ENCODE measurements at regions of chr10 and their contacts with region 1.

Region 1: DNA sequence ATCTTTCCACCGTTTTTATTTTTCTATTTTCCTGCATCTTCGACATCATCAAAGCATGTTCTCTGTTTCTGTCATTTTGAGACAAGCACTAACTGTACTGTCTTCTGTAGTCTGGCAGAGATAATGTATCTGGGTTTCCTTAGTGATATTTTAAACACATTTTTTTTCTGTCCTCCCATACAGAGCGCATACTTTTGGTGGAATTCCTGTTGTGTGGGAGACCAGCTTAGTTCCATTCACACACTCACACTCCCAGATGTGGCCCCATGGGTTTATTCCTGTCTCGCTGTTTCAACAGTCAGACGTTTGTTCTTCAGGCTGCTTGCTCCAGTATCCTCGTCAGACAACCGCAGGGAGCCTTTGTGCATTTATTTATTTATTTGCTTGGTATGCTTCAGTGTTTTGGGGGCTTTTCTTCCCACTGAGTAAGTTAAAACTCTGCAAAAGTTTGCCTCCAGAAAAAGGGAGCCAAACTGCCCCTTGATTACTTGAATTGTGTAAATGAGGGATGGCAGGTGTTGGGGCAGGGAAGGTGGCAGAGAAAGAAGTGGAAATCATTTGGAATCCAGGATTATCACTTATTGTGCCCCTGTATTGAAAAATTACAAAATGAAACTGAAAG is 456.8 kb upstream of the KLF6 start:
- DNase-seq: no peak
- ATAC-seq: peak; percentile 35 to 46
- H3K4me3 ChIP-seq: peak overlapping the region; percentile 10 to 50 (median 41)
- H3K27ac ChIP-seq: peak overlapping the region; percentile 69 to 83 (median 76)
- H3K4me1 ChIP-seq: peaks cover 11 to 33% of the 10 kb centered on the region in 2 donors
- H3K27me3 ChIP-seq: no peaks in the 10 kb centered on the region
- CTCF ChIP-seq: no peak
- POLR2A ChIP-seq: peak in 1 of 2 donors; percentile 8

Region 2: GRCh38 chr10:3902054-3902808 is 339.6 kb before region 1 on chr10:
- in situ Hi-C with region 1: no loop called
- intact Hi-C with region 1: loop called (anchors 10 kb)
- DNase-seq: no peak
- ATAC-seq: peak in 1 of 2 donors; percentile 33
- H3K4me3 ChIP-seq: no peak overlapping the region
- H3K27ac ChIP-seq: no peak overlapping the region
- H3K4me1 ChIP-seq: peaks cover 0 to 3% of the 10 kb centered on the region in 2 donors
- H3K27me3 ChIP-seq: no peaks in the 10 kb centered on the region
- CTCF ChIP-seq: no peak
- POLR2A ChIP-seq: no peak

Region 3: GRCh38 chr10:4183761-4184261 is 58.0 kb before region 1 on chr10:
- in situ Hi-C with region 1: no loop called
- intact Hi-C with region 1: no loop called
- DNase-seq: no peak
- ATAC-seq: no peak
- H3K4me3 ChIP-seq: no peak overlapping the region
- H3K27ac ChIP-seq: no peak overlapping the region
- H3K4me1 ChIP-seq: no peaks in the 10 kb centered on the region
- H3K27me3 ChIP-seq: no peaks in the 10 kb centered on the region
- CTCF ChIP-seq: no peak
- POLR2A ChIP-seq: no peak

Region 4: GRCh38 chr10:4283846-4284610 is 42.2 kb after region 1 on chr10:
- in situ Hi-C with region 1: no loop called
- intact Hi-C with region 1: loop called (anchors 5 kb)
- DNase-seq: peak; percentile 63 to 68
- ATAC-seq: peak; percentile 79
- H3K4me3 ChIP-seq: no peak overlapping the region
- H3K27ac ChIP-seq: peak overlapping the region; percentile 38 to 75 (median 64)
- H3K4me1 ChIP-seq: peaks cover 19 to 35% of the 10 kb centered on the region in 2 donors
- H3K27me3 ChIP-seq: no peaks in the 10 kb centered on the region
- CTCF ChIP-seq: no peak
- POLR2A ChIP-seq: no peak

Region 5: DNA sequence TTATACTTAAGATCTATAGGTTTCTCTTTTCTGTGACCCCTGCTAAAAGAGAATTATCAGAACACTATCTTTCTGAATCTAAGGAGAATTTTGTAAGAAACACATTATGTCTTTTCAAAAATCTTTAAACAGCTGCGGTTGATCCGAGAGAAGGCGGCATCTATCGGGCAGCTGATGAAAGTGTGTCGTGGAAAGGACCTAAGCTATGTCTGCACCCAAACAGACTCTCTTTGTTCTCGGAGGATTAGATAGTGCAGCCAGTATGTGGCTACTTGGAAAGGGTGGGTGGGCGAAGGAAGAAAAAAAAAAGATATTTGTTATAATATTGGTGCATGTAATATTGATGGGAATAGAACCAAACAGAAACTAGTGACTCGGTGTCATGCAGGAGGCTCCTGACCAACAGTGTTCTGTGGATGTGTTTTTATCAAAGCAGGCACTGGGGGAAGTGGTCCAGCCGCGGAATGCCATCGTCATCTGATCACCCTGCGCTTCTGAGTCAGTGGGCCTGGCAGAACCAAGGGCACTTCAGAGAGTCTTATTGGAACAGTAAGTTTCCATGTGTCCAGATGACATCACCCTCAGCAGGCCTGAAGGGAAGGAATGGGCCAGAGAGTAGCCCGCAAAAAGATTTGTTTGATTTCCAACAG is 74.5 kb after region 1 on chr10:
- in situ Hi-C with region 1: no loop called
- intact Hi-C with region 1: no loop called
- DNase-seq: peak; percentile 21 to 41
- ATAC-seq: peak; percentile 65 to 83
- H3K4me3 ChIP-seq: no peak overlapping the region
- H3K27ac ChIP-seq: peak overlapping the region in 3 of 4 donors; percentile 34 to 44 (median 41)
- H3K4me1 ChIP-seq: peaks cover 9 to 11% of the 10 kb centered on the region in 2 donors
- H3K27me3 ChIP-seq: no peaks in the 10 kb centered on the region
- CTCF ChIP-seq: peak in 1 of 5 experiments; percentile 25
- POLR2A ChIP-seq: no peak